Mammary epithelial cell (primary cell): ENCODE measurements at regions of chr1 and their contacts with region 1.

Region 1: GRCh38 chr1:204506961-204507387 is 9.2 kb upstream of the MDM4 start:
- DNase-seq: peak; percentile 86
- H3K4me3 ChIP-seq: peak overlapping the region; percentile 50 to 58 (median 56)
- H3K27ac ChIP-seq: peak overlapping the region; percentile 63
- H3K4me1 ChIP-seq: peaks cover 6% of the 10 kb centered on the region
- H3K27me3 ChIP-seq: no peaks in the 10 kb centered on the region
- CTCF ChIP-seq: no peak

Region 2: DNA sequence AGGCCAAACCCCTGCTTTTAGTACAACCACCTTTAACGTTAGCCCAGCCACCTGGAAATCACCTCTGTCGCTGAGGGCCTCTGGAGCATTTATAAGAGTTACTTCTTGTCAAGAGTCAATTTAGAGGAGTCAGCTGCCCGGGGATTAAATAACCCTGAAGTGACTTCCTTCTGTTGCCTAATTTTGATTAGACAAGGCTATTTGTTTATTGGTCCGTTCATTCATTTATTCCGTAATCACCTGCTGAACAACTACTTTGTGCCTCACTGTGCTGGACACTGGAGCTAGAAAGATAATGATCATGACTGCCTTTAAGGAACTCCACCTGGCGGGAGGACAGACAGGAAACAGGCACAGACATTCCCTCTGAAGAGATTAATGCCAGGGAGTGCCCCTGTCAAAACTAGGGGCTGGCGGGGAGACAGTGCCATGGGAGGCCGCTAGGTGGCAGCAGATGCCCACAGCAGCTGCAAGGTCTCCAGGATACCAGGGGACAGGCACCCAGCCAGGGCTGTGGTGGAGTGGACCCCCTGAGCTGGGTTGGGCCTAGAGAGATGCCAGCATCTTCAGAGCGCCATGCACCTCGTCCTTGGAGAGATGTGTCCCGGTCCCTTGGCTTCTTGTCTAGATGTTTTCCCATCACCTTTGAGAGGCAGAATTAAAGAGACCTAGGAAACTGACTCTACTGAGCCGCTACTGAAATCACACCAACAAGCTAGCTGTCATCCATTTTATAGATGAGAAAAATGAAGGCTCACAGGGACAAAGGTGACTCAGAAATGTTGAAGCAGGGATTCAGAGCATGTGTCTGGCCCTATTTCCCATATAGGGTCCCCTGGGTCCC is 344.5 kb before region 1 on chr1:
- CTCF ChIA-PET with region 1: interaction called, 5 read pairs
- dilution Hi-C with region 1: no loop called
- in situ Hi-C with region 1: no loop called
- intact Hi-C with region 1: loop called (anchors 5 kb)
- DNase-seq: peak; percentile 75
- H3K4me3 ChIP-seq: no peak overlapping the region
- H3K27ac ChIP-seq: no peak overlapping the region
- H3K4me1 ChIP-seq: peaks cover 10% of the 10 kb centered on the region
- H3K27me3 ChIP-seq: no peaks in the 10 kb centered on the region
- CTCF ChIP-seq: peak; percentile 99

Region 3: DNA sequence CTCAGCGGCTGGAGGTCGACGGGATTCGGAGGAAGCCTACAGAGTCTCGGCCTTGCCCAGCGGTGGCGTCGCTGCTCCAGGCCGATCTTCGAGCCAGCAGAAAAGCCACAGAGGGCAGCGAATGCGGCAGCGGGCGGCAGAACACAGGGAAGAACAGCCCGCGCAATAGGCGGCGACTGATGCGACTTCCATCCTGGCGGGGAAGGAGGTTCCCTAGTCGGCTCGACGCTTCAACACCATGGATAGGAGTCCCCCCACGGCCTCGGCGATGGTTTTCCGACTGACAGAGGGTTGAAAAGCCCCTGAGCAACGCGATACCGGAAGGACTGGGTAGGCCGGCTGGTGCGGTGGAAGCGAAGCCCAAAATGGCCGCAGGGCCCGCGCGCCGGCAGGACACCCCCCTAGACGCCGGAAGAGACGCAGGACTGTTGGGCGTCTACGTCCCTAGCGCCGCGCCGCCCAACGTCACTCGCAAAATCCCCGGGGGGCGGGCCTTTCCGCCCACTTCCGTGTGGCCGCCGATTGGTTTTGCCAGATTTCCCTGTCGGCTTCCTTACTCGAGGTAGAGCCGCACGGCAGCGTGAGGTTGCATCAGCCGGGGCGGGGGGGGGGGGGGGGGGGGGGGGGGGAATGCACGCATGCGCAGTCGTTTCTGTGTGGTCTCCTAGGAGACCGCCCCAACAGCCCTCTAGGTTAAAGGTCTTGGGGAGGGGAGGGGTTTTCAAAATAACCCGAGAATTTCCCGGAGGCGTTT is 95.3 kb before region 1 on chr1 and contains the start of gene PPP1R15B:
- CTCF ChIA-PET with region 1: no interaction called
- dilution Hi-C with region 1: no loop called
- in situ Hi-C with region 1: no loop called
- intact Hi-C with region 1: loop called (anchors 1 kb)
- DNase-seq: peak; percentile 99
- H3K4me3 ChIP-seq: peak within 1 kb of the TSS; percentile 64 to 99 (median 85)
- H3K27ac ChIP-seq: peak within 1 kb of the TSS; percentile 99
- H3K4me1 ChIP-seq: peaks cover 13% of the 10 kb centered on the region
- H3K27me3 ChIP-seq: no peaks in the 10 kb centered on the region
- CTCF ChIP-seq: no peak
- total RNA-seq, gene PPP1R15B: 33.4 to 37.5 TPM

Region 4: DNA sequence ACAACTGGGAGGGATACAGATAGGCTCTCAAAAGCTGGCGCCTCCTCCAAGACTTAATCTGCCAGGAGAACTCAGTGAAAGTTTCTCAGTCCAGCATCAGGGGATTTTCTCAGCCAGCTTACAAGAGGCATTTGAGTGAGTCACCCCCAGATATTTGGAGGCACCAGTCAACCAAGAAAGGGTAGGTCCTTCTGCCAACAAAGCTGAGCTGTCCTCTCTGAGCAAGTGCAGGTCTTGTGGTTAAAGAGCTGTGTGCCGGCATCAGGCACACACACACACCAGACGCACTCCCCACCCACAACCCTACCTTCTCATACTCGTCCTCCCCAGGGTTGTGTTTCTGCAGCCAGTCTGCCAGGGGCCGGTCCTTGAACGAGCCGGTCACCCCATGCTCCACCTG is 68.3 kb before region 1 on chr1:
- CTCF ChIA-PET with region 1: interaction called, 5 read pairs
- dilution Hi-C with region 1: loop called (anchors 5 kb)
- in situ Hi-C with region 1: loop called (anchors 5 kb)
- intact Hi-C with region 1: no loop called
- DNase-seq: peak; percentile 99
- H3K4me3 ChIP-seq: no peak overlapping the region
- H3K27ac ChIP-seq: peak overlapping the region; percentile 84
- H3K4me1 ChIP-seq: peaks cover 55% of the 10 kb centered on the region
- H3K27me3 ChIP-seq: no peaks in the 10 kb centered on the region
- CTCF ChIP-seq: no peak

Region 5: GRCh38 chr1:204494281-204495077 is 12.5 kb before region 1 on chr1 and contains the start of gene PIK3C2B:
- CTCF ChIA-PET with region 1: interaction called, 14 read pairs
- dilution Hi-C with region 1: no loop called
- in situ Hi-C with region 1: no loop called
- intact Hi-C with region 1: no loop called
- DNase-seq: peak; percentile 84
- H3K4me3 ChIP-seq: peak within 1 kb of the TSS; percentile 41 to 93 (median 82)
- H3K27ac ChIP-seq: peak within 1 kb of the TSS; percentile 30
- H3K4me1 ChIP-seq: peaks cover 17% of the 10 kb centered on the region
- H3K27me3 ChIP-seq: no peaks in the 10 kb centered on the region
- CTCF ChIP-seq: peak; percentile 26 to 68
- total RNA-seq, gene PIK3C2B: 7.5 to 14.5 TPM

Region 6: DNA sequence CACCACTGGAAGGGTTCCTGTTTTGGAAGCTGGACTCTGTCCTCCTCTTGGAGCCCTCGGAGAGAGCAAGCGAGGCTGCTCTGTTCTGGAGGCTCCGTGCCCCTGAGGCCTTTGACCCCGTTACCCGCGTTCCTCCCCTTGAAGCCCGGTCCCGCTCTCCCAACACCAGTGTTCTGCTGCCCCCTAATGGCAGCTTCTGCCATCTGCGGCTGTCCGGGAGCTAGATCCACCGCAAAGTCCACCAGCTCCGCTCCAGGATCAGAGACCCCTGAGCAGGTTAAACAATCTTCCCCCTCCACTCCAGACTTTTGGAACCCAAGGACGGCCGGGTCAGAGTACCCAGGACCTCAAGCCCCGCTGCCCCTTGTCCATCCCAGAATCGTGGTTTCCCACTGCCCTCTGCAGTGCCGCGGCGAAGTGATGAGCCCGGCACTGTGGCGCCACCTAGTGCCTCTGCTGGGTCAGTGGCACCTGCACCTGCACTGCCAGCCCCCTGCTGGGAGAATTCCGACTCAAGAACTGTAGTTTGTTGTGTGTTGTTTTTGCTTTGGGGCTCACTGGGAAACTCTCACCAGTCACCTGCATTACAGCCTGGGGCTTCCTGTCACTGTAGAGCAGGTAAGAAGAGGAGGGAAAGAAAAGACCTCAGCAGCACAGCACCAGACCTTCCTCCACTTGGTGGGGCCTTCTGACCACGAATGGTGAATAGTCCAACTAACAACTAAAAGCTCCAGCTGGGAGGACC is 300.1 kb after region 1 on chr1:
- CTCF ChIA-PET with region 1: no interaction called
- dilution Hi-C with region 1: no loop called
- in situ Hi-C with region 1: no loop called
- intact Hi-C with region 1: loop called (anchors 1 kb)
- DNase-seq: peak; percentile 63
- H3K4me3 ChIP-seq: peak overlapping the region; percentile 37 to 59 (median 39)
- H3K27ac ChIP-seq: no peak overlapping the region
- H3K4me1 ChIP-seq: no peaks in the 10 kb centered on the region
- H3K27me3 ChIP-seq: no peaks in the 10 kb centered on the region
- CTCF ChIP-seq: peak; percentile 82 to 96